ENCODE measurements at regions of chr11 and their contacts with region 1.

Region 1: DNA sequence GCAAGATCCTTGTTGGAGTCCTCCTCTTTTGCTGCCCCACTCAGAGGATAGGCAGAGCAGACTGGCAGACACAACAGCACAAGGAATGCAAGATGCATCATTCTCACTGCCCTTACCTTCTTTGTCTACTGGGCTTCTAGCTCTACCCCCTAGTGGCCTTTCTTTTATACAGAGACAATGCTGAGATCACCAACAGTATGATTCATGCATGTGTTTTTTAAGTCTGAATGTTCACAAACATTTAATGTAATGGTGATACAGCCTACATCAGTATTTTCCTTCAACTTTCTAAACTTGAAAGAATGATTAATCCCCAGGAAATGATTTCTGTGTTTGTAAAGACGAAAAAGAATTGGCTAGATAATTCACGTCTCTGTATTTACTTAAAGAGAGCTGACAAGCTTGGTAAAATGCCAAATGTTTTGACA is at the start of gene MMP10:
- DNase-seq: peak; percentile 92
- ATAC-seq: peak; percentile 54
- H3K4me3 ChIP-seq: no peak within 1 kb of the TSS
- H3K27ac ChIP-seq: peak within 1 kb of the TSS; percentile 18
- H3K4me1 ChIP-seq: peaks cover 23% of the 10 kb centered on the region
- H3K27me3 ChIP-seq: no peaks in the 10 kb centered on the region
- CTCF ChIP-seq: peak; percentile 87
- total RNA-seq, gene MMP10: 0.07 and 0.69 TPM in 2 replicates

Region 2: DNA sequence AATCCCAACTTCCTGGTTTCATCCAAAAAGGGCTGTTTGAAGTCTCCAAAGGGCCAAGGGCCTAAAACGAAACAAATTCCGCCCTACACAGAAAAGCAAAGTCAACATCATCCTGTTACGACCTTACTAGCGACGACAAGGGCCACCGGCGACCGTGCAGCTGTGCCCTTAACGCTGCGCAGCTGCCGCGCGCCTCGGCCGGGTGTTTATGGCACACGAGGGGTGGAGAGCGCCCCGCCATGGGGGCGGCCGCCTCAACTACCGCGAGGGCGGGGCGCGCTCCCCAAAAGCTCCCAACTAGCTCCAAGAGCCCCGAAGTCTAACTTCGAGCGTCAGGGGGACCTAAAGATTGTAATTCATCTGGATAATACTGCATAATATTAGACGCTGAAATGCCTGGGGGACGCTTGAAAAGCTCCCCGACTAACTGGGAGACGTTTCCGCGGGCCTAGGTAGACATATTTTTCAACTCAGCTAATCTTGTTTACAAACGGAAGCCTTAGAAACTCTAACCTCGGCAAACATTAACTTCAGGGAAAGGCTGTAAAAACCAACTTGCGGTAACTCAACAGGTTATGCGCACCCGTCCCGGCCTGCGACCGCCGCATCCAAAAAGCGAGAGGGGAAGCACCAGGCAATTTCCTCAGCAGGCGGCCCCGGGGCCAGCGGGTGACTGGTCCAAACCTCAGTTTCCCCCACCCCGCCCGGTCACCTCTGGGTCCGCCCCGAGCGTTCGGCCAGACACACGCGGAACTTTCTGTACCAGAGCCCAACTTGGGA is 328.6 kb before region 1 on chr11:
- CTCF ChIA-PET with region 1: no interaction called
- POLR2A ChIA-PET with region 1: no interaction called
- intact Hi-C with region 1: no loop called
- DNase-seq: peak; percentile 67
- ATAC-seq: peak; percentile 49
- H3K4me3 ChIP-seq: peak overlapping the region; percentile 81
- H3K27ac ChIP-seq: peak overlapping the region; percentile 65
- H3K4me1 ChIP-seq: peaks cover 56% of the 10 kb centered on the region
- H3K27me3 ChIP-seq: no peaks in the 10 kb centered on the region
- CTCF ChIP-seq: peak; percentile 44; the same call in 1 of the 2 replicates

Region 3: DNA sequence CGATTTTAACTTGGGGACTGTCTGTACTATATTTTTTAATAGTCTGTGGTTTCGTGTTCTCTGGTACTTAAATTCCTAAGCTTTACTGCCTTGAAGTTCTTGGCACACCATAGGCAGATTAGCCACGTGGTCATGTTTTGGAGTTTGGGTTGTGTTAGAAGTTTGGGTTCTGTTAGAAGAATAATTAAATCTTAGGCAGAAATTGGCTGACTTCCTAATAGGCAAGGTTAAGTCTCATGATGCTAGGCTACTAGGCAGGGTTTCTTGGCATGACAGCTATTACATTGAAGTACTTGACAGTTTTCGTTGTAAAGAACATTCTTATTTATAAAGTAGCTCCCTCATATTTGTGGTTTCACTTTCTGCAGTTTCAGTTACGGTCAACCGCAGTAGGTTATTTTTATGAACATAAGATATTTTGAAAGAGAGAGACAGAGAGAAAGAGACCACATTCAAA is 219.9 kb before region 1 on chr11:
- CTCF ChIA-PET with region 1: no interaction called
- POLR2A ChIA-PET with region 1: no interaction called
- intact Hi-C with region 1: loop called (anchors 10 kb)
- DNase-seq: peak; percentile 65
- ATAC-seq: peak; percentile 44
- H3K4me3 ChIP-seq: peak overlapping the region; percentile 60
- H3K27ac ChIP-seq: peak overlapping the region; percentile 55
- H3K4me1 ChIP-seq: peaks cover 43% of the 10 kb centered on the region
- H3K27me3 ChIP-seq: no peaks in the 10 kb centered on the region
- CTCF ChIP-seq: no peak

Region 4: GRCh38 chr11:102760355-102761035 is 20.0 kb before region 1 on chr11:
- CTCF ChIA-PET with region 1: no interaction called
- POLR2A ChIA-PET with region 1: no interaction called
- intact Hi-C with region 1: loop called (anchors 1 kb)
- DNase-seq: peak; percentile 97
- ATAC-seq: peak; percentile 71
- H3K4me3 ChIP-seq: no peak overlapping the region
- H3K27ac ChIP-seq: peak overlapping the region; percentile 9
- H3K4me1 ChIP-seq: peaks cover 44% of the 10 kb centered on the region
- H3K27me3 ChIP-seq: no peaks in the 10 kb centered on the region
- CTCF ChIP-seq: no peak

Region 5: DNA sequence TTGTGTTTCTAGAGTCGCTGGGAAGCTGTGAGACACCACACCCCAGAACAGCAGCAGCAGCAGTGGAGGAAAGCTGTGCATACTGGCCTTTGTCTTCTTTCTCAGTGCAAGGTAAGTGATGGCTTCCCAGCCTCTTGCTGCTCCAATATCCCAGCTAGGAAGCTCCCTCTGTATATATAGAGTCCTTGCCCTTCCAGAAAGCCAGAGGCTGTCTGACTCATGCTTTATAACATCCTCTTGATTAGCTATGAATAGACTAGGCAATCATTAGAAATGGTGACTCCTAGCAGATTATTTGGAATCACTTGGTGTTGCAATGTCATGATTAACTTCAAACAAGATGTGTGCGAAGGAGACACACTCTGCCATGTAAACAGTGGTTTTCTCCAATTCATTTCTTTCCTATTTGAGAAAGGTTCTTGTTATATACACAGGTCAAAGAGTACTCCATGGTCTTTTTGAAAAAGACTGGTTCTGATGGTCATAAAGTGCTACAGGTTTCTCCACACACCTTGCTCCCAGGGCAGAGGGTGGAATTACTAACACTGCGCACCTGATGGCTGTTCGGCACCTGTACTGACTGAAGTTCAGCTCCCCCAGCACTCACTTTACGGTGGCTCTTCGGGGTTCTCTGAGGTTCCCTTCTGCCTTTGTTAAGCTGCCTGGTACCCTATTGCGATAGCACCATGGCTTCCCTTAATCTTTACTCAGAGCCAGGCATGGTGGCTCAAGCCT is 17.7 kb after region 1 on chr11 and contains the start of gene MMP1:
- CTCF ChIA-PET with region 1: interaction called, 4 read pairs
- POLR2A ChIA-PET with region 1: no interaction called
- intact Hi-C with region 1: loop called (anchors 1 kb)
- DNase-seq: peak; percentile 98
- ATAC-seq: peak; percentile 89
- H3K4me3 ChIP-seq: no peak within 1 kb of the TSS
- H3K27ac ChIP-seq: peak within 1 kb of the TSS; percentile 66
- H3K4me1 ChIP-seq: peaks cover 33% of the 10 kb centered on the region
- H3K27me3 ChIP-seq: no peaks in the 10 kb centered on the region
- CTCF ChIP-seq: no peak
- total RNA-seq, gene MMP1: 6.5 and 7.3 TPM in 2 replicates

Region 6: GRCh38 chr11:102900346-102900745 is 119.8 kb after region 1 on chr11:
- CTCF ChIA-PET with region 1: no interaction called
- POLR2A ChIA-PET with region 1: no interaction called
- intact Hi-C with region 1: no loop called
- DNase-seq: no peak
- ATAC-seq: no peak
- H3K4me3 ChIP-seq: no peak overlapping the region
- H3K27ac ChIP-seq: no peak overlapping the region
- H3K4me1 ChIP-seq: no peaks in the 10 kb centered on the region
- H3K27me3 ChIP-seq: no peaks in the 10 kb centered on the region
- CTCF ChIP-seq: no peak